ENCODE measurements at regions of chr4 and their contacts with region 1.

Region 1: GRCh38 chr4:87521757-87522374 is 7.3 kb downstream of the SPARCL1 start:
- DNase-seq: no peak
- ATAC-seq: peak; percentile 40
- H3K4me3 ChIP-seq: no peak overlapping the region
- H3K27ac ChIP-seq: peak overlapping the region; percentile 90 to 100
- H3K4me1 ChIP-seq: peaks cover 7 to 10% of the 10 kb centered on the region in 2 donors
- H3K27me3 ChIP-seq: no peaks in the 10 kb centered on the region

Region 2: GRCh38 chr4:87489678-87490077 is 32.2 kb before region 1 on chr4:
- intact Hi-C with region 1: loop called in 1 of 2 experiments (anchors 5 kb)
- DNase-seq: no peak
- ATAC-seq: peak; percentile 26
- H3K4me3 ChIP-seq: no peak overlapping the region
- H3K27ac ChIP-seq: no peak overlapping the region
- H3K4me1 ChIP-seq: peaks cover 3 to 4% of the 10 kb centered on the region in 2 donors
- H3K27me3 ChIP-seq: no peaks in the 10 kb centered on the region

Region 3: DNA sequence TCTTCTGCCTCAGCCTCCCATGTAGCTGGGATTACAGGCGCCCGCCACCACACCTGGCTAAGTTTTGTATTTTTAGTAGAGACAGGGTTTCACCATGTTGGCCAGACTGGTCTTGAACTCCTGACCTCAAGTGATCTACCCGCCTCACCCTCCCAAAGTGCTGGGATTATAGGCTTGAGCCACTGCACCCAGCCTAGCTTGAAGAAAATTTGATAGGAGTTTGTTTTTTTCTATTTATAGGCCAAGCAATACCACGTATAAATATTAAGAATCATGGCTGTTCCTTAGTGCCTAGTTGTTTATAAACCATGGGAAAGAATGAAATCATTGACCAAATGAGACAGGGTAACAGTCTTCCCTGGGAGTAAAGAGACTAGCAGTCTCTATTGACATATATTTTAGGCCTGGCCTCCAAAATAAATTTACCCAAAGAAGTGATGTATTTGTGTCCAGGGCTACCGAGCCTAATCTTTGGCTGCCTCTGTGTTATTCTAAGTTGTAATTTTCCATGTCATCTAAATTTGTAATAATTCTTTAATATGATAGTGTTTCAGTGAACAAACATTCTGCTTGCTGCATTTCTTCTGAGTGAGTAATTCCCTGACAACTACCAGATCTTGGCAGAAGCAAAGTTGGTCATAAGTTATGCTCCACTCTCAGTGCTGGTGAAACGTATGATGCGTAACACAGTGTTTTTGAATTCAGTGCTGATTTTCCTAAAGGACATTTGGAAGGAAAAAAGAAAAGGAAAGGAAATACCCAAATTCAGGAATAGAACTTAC is 495.8 kb after region 1 on chr4:
- intact Hi-C with region 1: loop called in 1 of 2 experiments (anchors 10 kb)
- DNase-seq: no peak
- ATAC-seq: peak; percentile 93
- H3K4me3 ChIP-seq: no peak overlapping the region
- H3K27ac ChIP-seq: peak overlapping the region; percentile 79 to 99
- H3K4me1 ChIP-seq: peaks cover 4 to 12% of the 10 kb centered on the region in 2 donors
- H3K27me3 ChIP-seq: no peaks in the 10 kb centered on the region

Measured in aorta (tissue), 5 donors.